ENCODE measurements at regions of chr2 and their contacts with region 1.

Region 1: GRCh38 chr2:73112913-73113633 is at the start of gene RAB11FIP5:
- DNase-seq: peak; percentile 86
- H3K4me3 ChIP-seq: peak within 1 kb of the TSS; percentile 79 to 89 (median 86)
- H3K27ac ChIP-seq: peak within 1 kb of the TSS; percentile 92
- H3K4me1 ChIP-seq: peaks cover 16% of the 10 kb centered on the region
- H3K27me3 ChIP-seq: no peaks in the 10 kb centered on the region
- CTCF ChIP-seq: no peak
- total RNA-seq, gene RAB11FIP5: 36.0 to 39.7 TPM

Region 2: GRCh38 chr2:73071360-73072133 is 41.5 kb before region 1 on chr2 and contains the start of gene SFXN5:
- CTCF ChIA-PET with region 1: no interaction called
- dilution Hi-C with region 1: no loop called
- in situ Hi-C with region 1: no loop called
- intact Hi-C with region 1: loop called (anchors 2 kb)
- DNase-seq: peak; percentile 93
- H3K4me3 ChIP-seq: peak within 1 kb of the TSS; percentile 59 to 91 (median 86)
- H3K27ac ChIP-seq: peak within 1 kb of the TSS; percentile 72
- H3K4me1 ChIP-seq: peaks cover 35% of the 10 kb centered on the region
- H3K27me3 ChIP-seq: no peaks in the 10 kb centered on the region
- CTCF ChIP-seq: peak in 1 of 2 donors; percentile 31
- total RNA-seq, gene SFXN5: 12.0 to 16.8 TPM

Region 3: GRCh38 chr2:73223821-73224220 is 110.7 kb after region 1 on chr2:
- CTCF ChIA-PET with region 1: no interaction called
- dilution Hi-C with region 1: no loop called
- in situ Hi-C with region 1: no loop called
- intact Hi-C with region 1: no loop called
- DNase-seq: no peak
- H3K4me3 ChIP-seq: no peak overlapping the region
- H3K27ac ChIP-seq: no peak overlapping the region
- H3K4me1 ChIP-seq: no peaks in the 10 kb centered on the region
- H3K27me3 ChIP-seq: no peaks in the 10 kb centered on the region
- CTCF ChIP-seq: no peak

Measured in mammary epithelial cell (primary cell).